ENCODE measurements at regions of chrX and their contacts with region 1.

Region 1: GRCh38 chrX:153981771-153982533 is 9.4 kb downstream of the TMEM187 start:
- DNase-seq: peak; percentile 64 to 72 (median 68)
- H3K4me3 ChIP-seq: peak overlapping the region in 1 of 2 donors; percentile 19
- H3K4me3 Mint-ChIP-seq: peak overlapping the region; percentile 59 to 86 (median 74)
- H3K27ac ChIP-seq: peak overlapping the region; percentile 52
- H3K27ac Mint-ChIP-seq: peak overlapping the region; percentile 90 to 97 (median 94)
- H3K4me1 ChIP-seq: peaks cover 56% of the 10 kb centered on the region
- H3K4me1 Mint-ChIP-seq: peaks cover 22 to 67% (median 40%) of the 10 kb centered on the region in 4 donors
- H3K27me3 ChIP-seq: no peaks in the 10 kb centered on the region
- H3K27me3 Mint-ChIP-seq: no peaks in the 10 kb centered on the region

Region 2: GRCh38 chrX:154002215-154002719 is 20.3 kb after region 1 on chrX:
- CTCF ChIA-PET with region 1: interaction called, 3 read pairs
- POLR2A ChIA-PET with region 1: interaction called, 14 read pairs
- intact Hi-C with region 1: no loop called
- DNase-seq: peak; percentile 26 to 64 (median 39)
- H3K4me3 ChIP-seq: peak overlapping the region in 1 of 2 donors; percentile 40
- H3K4me3 Mint-ChIP-seq: peak overlapping the region; percentile 67 to 88 (median 79)
- H3K27ac ChIP-seq: no peak overlapping the region
- H3K27ac Mint-ChIP-seq: peak overlapping the region; percentile 43 to 92 (median 79)
- H3K4me1 ChIP-seq: peaks cover 15% of the 10 kb centered on the region
- H3K4me1 Mint-ChIP-seq: peaks cover 10 to 18% (median 13%) of the 10 kb centered on the region in 4 donors
- H3K27me3 ChIP-seq: no peaks in the 10 kb centered on the region
- H3K27me3 Mint-ChIP-seq: no peaks in the 10 kb centered on the region

Region 3: DNA sequence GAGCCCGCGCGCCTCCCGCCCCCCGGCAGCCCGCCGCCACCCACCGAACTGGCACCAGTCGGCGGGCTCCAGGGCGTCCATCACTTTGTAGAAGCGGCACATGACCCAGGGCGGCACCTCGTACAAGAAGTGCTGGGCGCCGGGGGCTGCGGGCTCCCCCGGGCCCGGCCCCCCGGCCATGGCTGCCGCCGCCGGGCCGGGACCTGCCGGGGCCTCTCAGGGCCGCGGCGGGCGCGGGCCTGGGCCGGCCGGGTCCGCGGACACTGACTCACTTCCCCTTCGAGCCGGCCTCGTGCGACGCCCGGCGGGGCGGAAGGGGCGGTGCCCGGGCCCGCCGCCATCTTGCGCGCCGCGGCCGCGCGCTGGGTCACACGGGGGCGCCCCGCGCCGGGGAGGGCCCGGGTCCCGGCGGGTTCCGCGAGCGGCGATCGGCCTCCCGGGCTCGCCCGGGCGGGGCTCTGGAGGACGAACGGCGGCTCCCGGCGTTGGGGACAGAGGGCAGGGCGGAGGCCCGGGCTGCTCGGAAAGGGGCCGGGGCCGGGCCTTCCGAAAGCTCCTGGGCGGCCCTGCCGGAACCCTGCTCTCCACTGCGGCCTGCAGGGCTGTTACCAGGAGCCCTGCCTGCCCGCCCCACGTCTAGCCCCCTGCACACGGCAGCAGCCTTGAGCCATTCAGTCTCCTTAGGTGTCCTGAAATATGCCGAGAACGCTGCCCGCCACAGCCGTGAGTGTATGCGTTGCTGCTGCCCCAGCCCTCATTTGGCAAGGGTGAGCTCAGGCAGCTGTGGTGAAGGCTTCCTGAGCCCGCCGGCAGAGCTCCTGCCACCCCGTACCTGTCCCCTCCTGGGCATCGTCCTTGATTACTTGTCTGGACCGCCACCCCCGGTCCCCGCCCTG is 37.9 kb after region 1 on chrX and contains the start of gene IRAK1:
- CTCF ChIA-PET with region 1: interaction called, 3 read pairs
- POLR2A ChIA-PET with region 1: interaction called, 19 read pairs
- intact Hi-C with region 1: no loop called
- DNase-seq: peak; percentile 36 to 62 (median 54)
- H3K4me3 ChIP-seq: peak within 1 kb of the TSS; percentile 28 to 60
- H3K4me3 Mint-ChIP-seq: peak within 1 kb of the TSS; percentile 86 to 93 (median 89)
- H3K27ac ChIP-seq: peak within 1 kb of the TSS; percentile 78
- H3K27ac Mint-ChIP-seq: peak within 1 kb of the TSS; percentile 91 to 95 (median 94)
- H3K4me1 ChIP-seq: peaks cover 18% of the 10 kb centered on the region
- H3K4me1 Mint-ChIP-seq: peaks cover 3 to 29% (median 15%) of the 10 kb centered on the region in 4 donors
- H3K27me3 ChIP-seq: no peaks in the 10 kb centered on the region
- H3K27me3 Mint-ChIP-seq: no peaks in the 10 kb centered on the region
- total RNA-seq, gene IRAK1: 66.9 to 74.5 TPM

Measured in CD4-positive, alpha-beta memory T cell (primary cell).